ENCODE measurements at regions of chr17 and their contacts with region 1.

Region 1: DNA sequence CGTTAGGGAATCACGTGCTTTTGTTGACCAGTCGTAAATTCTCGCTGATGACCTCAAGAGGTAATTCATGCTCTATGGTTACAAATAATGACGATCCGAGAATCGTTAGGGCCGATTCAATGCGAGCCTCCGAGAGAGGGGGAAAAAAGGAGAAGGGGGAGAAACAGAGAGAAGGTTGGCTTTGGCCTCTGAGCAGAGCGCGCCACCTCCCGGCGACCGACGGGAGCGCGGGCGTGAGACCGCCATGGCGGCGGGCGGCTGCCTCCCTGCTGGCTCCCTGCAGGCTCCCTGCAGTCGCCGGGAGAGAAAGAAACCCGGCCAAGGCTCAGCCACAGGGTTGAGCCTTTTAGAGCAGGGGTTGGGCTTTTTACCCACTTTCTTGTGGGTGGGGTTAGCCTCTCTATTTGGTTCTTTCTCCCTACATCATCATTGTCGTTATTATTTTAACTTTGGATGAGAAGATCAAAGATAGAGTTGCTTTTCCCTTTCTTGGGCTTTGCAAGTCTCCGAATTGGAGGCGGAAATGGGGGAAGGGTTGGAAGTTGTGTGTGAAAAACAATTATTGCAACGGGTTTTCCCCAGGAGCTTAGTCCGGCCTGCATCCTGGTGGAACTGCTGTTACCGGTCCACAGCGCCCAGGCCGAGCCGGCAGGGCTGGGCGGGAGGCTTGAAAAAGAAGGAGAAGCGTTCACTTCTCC is 410 bp upstream of the HOXB5 start:
- DNase-seq: peak; percentile 96
- H3K4me3 ChIP-seq: no peak overlapping the region; a peak in 1 of 4 replicates
- H3K27ac ChIP-seq: no peak overlapping the region
- H3K4me1 ChIP-seq: 0 out of 4 replicates have a peak, but pooled peaks cover 0 to 4% of the 10 kb centered on the region in 2 experiments
- H3K27me3 ChIP-seq: peaks cover 98% of the 10 kb centered on the region
- CTCF ChIP-seq: peak; percentile 97
- EP300 ChIP-seq: no peak
- RAD21 ChIP-seq: peak; percentile 86

Region 2: DNA sequence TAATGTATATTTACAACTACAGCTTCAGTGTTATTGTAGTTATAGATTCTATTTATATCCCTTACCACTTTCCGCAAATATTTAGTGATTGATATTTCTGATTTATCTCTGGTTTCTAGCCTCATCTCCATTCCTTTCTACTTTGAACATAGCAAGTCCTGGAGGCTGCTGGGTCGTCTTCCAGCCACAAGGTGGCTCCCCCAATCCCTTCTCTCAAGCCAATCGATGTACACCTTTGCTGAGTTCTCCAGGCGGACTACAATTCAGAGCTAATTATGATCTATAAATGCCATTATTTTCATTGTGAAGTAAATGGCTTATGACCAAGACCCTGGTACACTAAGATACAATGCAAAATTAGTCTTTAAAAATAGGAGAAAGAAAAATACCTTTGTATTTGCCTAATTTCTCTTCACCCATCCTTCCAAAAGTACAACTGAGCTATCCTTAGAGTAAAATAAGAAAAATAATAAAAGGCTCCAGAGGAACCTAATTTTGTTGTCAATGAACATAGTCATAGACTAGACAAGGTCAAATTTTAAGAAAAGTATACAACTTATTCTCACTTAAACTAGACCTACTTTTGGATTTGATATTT is 286.1 kb before region 1 on chr17:
- CTCF ChIA-PET with region 1: interaction called, 12 read pairs
- POLR2A ChIA-PET with region 1: no interaction called
- DNase-seq: peak; percentile 48
- H3K4me3 ChIP-seq: no peak overlapping the region; a peak in 1 of 4 replicates
- H3K27ac ChIP-seq: no peak overlapping the region
- H3K4me1 ChIP-seq: no peaks in the 10 kb centered on the region; a peak in 1 of 4 replicates
- H3K27me3 ChIP-seq: peaks cover 52% of the 10 kb centered on the region
- CTCF ChIP-seq: peak; percentile 97
- EP300 ChIP-seq: no peak
- RAD21 ChIP-seq: peak; percentile 67

Region 3: DNA sequence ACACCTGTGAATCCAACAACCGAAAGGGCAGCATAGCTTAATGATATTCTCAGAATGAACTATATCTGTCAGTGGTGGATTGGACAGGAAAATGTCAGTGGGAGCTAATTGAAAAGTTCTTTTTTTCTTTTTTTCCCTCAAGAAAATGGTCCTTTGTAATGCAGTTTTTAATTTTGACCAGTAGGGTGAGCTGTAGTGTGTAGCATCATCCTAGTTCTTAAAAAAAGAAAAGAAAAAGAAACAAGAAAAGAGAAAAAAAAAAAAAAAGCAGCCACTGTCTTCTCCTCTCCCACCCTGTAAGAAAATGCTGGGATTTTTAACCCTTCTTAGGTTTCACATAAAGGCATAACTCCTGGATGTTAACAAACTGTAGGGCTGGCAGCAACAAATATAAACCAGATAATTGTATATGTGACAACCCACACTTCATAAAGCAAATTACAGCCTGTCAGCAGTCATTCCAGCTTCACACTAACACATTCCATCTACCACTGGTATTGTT is 242.1 kb before region 1 on chr17:
- CTCF ChIA-PET with region 1: interaction called, 12 read pairs
- POLR2A ChIA-PET with region 1: no interaction called
- DNase-seq: peak; percentile 32
- H3K4me3 ChIP-seq: no peak overlapping the region; a peak in 1 of 4 replicates
- H3K27ac ChIP-seq: no peak overlapping the region
- H3K4me1 ChIP-seq: no peaks in the 10 kb centered on the region
- H3K27me3 ChIP-seq: peaks cover 50% of the 10 kb centered on the region
- CTCF ChIP-seq: peak; percentile 94
- EP300 ChIP-seq: no peak
- RAD21 ChIP-seq: peak; percentile 62

Region 4: DNA sequence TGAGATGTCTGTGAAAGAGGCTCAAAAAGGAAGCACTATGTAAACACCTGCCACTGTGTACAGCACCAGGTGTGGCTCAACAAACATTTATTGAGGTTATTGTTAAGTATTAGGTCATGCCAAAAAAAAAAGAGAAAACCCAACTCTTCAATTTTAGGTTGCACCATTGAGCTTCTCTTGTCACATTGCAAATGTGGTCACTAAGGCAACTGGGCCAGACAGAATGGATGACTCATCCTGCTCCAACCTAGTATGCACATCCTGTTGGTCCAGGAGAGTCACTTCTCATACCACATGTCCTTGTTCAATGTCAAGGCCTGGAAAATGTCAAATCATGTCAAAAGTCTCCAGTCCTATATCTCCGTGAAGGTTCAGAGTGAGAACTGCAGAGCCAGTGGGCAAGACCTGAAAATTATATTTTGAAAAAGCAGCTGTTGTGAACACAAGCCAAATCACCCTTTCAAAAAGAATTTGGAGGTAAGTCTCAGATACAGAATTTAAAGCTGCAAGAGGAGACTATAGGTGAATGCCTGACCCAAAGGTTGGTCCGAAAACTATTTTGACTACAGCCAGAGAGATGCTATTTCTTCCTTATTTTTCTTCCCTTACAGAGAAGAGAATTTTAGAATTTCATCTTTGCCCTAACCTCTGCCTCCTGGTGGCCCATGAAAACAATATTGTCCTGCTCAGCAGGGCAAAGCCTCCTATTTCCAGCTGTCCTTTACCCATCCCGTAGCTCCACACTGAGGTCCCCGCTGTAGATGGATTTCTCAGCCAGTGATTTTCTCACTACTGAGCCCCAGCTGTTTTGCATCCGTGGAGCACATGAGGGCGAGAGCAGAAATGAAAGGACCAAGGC is 88.0 kb before region 1 on chr17:
- CTCF ChIA-PET with region 1: no interaction called
- POLR2A ChIA-PET with region 1: no interaction called
- DNase-seq: no peak
- H3K4me3 ChIP-seq: no peak overlapping the region
- H3K27ac ChIP-seq: no peak overlapping the region; a peak in 1 of 4 replicates
- H3K4me1 ChIP-seq: no peaks in the 10 kb centered on the region
- H3K27me3 ChIP-seq: peaks cover 72% of the 10 kb centered on the region
- CTCF ChIP-seq: peak; percentile 42
- EP300 ChIP-seq: no peak
- RAD21 ChIP-seq: no peak

Region 5: DNA sequence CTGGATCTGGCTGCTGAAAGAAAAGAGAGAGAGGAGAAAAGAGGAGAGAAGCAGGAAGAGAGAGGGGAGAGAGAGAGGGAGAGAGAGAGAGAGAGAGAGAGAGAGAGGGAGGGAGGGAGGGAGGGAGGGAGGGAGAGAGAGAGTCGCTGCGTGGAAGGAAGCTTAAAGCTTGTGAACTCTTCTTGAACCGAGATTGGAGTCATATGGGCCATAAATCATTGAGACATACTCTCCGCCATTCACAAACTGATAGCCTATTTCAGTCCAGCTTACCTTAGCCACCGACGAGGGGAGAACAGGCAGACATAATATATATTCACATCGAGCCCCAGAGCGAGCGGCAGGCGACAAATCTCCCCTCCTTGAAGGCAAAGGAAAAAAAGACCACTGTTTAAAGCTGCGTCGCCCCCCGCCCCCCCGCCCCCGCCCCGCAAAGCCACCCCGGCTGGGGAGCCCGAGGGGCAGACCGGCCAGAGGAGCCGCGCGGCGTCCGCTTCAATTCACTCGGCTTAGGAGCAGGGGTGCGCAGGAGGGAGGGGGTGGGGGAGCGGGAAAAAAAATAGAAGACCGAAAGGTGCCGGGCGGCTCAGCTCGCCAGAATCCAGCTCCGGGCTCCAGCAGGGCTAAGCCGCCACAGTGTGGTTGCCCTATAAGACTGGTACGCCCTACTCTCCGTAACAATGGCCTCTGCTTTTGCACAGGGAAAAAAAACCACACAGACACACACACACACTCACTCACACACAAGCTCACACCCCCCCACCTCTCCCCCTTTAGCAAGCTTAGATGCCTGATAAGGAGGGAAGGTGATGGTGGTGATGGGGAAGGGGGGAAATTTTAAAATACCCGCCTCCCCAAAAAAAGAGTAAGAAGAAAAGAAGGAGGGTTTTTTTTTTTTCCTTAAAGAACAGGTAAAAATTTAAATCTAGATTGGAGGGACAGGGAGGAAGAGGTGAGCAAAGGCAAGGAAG is 38.4 kb before region 1 on chr17:
- CTCF ChIA-PET with region 1: interaction called, 10 read pairs
- POLR2A ChIA-PET with region 1: no interaction called
- DNase-seq: no peak
- H3K4me3 ChIP-seq: no peak overlapping the region
- H3K27ac ChIP-seq: no peak overlapping the region
- H3K4me1 ChIP-seq: no peaks in the 10 kb centered on the region
- H3K27me3 ChIP-seq: peaks cover 97% of the 10 kb centered on the region
- CTCF ChIP-seq: no peak
- EP300 ChIP-seq: no peak
- RAD21 ChIP-seq: no peak

Region 6: DNA sequence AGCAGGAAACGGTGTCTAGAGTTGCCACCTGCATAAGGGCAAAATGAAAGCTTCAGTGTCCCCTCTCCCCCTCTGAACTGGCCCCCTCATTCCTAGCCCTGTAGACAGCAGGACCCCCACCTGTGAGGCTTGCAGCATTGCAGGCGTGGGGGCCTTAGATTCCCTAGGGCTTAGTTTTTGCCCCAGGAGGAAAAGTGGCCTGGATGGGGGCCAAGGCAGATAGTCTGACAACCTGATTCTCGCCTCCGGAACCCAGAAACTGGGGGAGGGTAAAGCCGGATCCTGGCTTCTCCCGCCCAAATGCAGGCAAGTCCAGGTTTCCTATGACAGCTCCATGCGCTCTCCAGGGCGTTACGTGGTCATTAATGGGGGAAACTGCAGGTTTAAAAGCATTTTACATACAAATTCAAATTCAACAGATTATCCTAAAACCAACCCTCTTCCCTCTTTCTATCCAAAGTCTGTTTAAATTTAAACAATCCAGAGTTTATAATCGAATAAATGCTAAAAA is 11.5 kb after region 1 on chr17:
- CTCF ChIA-PET with region 1: interaction called, 14 read pairs
- POLR2A ChIA-PET with region 1: no interaction called
- DNase-seq: no peak
- H3K4me3 ChIP-seq: no peak overlapping the region
- H3K27ac ChIP-seq: no peak overlapping the region
- H3K4me1 ChIP-seq: no peaks in the 10 kb centered on the region; a peak in 1 of 4 replicates
- H3K27me3 ChIP-seq: peaks cover 100% of the 10 kb centered on the region
- CTCF ChIP-seq: no peak
- EP300 ChIP-seq: no peak
- RAD21 ChIP-seq: no peak

Region 7: DNA sequence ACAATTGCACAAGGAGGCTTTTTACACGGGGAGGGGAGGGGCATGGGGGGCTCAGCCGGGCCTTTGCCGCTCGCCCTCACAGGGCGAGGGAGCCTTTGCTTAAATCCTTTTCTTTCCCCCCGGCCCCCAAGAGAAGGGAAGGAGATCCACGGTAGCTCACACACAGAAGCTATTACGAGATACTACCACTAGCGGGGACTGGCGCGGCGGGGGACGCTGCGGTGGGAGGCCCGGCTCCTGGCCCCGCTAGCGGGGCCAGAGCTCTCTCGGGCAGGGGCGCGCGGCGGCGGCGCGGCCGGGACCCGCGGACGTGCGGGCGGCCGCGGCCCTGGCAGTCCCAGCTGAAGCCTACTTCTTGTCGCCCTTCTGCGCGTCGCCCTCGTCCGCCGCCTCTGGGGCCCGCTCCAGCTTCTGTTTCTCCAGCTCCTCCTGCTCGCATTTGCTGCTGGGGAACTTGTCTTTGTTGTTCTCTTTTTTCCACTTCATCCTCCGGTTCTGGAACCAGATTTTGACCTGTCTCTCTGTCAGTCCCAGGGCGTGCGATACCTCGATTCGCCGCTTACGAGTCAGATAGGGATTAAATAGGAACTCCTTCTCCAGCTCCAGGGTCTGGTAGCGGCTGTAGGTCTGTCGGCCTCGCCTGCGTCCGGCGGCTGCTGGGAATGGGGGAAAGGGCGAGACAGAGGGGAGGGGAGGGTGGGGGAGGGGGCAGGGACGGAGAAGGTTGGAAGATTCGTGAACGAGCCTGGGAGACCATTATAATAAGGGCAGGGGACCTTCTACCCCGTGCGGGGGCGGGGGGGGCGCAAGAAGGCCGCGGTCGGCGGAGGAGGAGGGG is 19.1 kb after region 1 on chr17:
- CTCF ChIA-PET with region 1: interaction called, 20 read pairs
- POLR2A ChIA-PET with region 1: no interaction called
- DNase-seq: peak; percentile 88
- H3K4me3 ChIP-seq: 0 out of 4 replicates have a peak overlapping the region, but pooled peaks of 1 of the 2 experiments have one; percentile 15
- H3K27ac ChIP-seq: no peak overlapping the region
- H3K4me1 ChIP-seq: no peaks in the 10 kb centered on the region; a peak in 1 of 4 replicates
- H3K27me3 ChIP-seq: peaks cover 99% of the 10 kb centered on the region
- CTCF ChIP-seq: no peak
- EP300 ChIP-seq: no peak
- RAD21 ChIP-seq: no peak